ENCODE measurements at regions of chr1 and their contacts with region 1.

Region 1: GRCh38 chr1:31910933-31911332 is 27.2 kb downstream of the PTP4A2 start:
- DNase-seq: no peak
- ATAC-seq: peak; percentile 41
- H3K4me3 ChIP-seq: no peak overlapping the region
- H3K4me3 Mint-ChIP-seq: peak overlapping the region in 5 of 10 donors; percentile 1 to 43 (median 20)
- H3K27ac ChIP-seq: no peak overlapping the region
- H3K27ac Mint-ChIP-seq: peak overlapping the region; percentile 19 to 78 (median 61)
- H3K4me1 ChIP-seq: peaks cover 27 to 40% of the 10 kb centered on the region in 2 donors
- H3K4me1 Mint-ChIP-seq: peaks cover 34 to 61% (median 58%) of the 10 kb centered on the region in 7 donors
- H3K27me3 ChIP-seq: no peaks in the 10 kb centered on the region
- H3K27me3 Mint-ChIP-seq: no peaks in the 10 kb centered on the region

Region 2: DNA sequence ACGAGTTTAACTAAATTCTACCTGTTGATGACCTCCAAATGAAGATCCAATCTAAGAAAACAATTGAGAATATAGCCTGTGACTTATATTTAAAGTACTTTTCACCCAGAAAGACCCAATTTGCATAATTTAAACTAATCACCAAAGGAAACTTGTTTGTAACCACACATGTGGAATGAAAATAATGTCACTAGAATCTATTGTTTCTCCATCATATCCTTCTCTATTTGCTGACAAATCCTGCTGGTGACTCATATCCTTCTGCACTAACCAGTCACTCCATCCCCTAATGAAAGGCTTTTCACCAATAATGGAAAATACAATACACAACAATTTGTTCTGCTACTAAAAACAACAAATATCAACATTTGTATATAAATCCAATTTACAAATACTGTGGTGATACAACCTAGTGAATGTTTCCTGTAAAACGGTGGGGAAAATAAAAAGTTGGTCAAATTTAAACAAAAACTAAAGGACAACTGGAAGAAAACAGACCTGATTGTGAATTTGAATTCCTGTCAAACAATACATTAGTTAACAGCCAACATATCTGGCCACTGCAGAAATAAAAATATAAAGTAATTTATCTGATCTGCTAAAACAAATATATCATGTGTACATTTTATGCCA is 20.8 kb after region 1 on chr1:
- CTCF ChIA-PET with region 1: interaction called, 3 read pairs
- POLR2A ChIA-PET with region 1: interaction called, 22 read pairs
- intact Hi-C with region 1: loop called in 1 of 2 experiments (anchors 2 kb)
- DNase-seq: no peak
- ATAC-seq: peak; percentile 44
- H3K4me3 ChIP-seq: peak overlapping the region; percentile 33
- H3K4me3 Mint-ChIP-seq: peak overlapping the region; percentile 49 to 100 (median 94)
- H3K27ac ChIP-seq: peak overlapping the region; percentile 81
- H3K27ac Mint-ChIP-seq: peak overlapping the region; percentile 68 to 95 (median 91)
- H3K4me1 ChIP-seq: peaks cover 72 to 79% of the 10 kb centered on the region in 2 donors
- H3K4me1 Mint-ChIP-seq: peaks cover 70 to 99% (median 90%) of the 10 kb centered on the region in 7 donors
- H3K27me3 ChIP-seq: no peaks in the 10 kb centered on the region
- H3K27me3 Mint-ChIP-seq: no peaks in the 10 kb centered on the region